Ascending aorta (tissue), 2 donors: ENCODE measurements at regions of chr1 and their contacts with region 1.

Region 1: DNA sequence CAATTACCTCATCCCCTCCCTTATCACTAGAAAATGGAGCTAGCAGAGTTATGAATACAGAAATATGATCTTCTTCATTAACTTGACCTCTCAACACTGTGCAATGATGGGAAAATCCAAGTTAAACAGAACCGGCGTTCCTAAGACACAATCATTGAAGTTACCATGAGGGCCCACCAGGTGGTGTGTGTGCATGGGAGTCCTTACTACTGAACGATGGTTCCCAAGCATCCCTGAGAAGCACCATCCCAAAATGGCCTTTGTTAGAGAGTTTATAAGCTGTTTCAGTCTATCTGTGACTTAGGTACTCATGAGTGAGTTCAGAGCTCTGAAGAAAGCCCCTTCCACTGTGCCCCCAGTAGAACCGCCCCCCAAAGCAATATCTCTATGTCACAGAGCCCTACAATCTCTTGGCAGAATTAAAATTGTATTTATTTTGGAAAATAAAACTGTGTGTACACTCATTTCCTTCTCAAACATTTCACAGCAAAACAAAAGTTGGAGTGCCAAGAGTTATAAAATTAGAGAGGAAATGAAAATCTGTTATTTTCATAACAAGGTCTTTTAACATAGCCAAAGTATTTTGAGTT is 56.8 kb downstream of the PLD5 start:
- DNase-seq: peak in 1 of 2 donors; percentile 85
- H3K4me3 ChIP-seq: peak overlapping the region; percentile 11 to 28
- H3K27ac ChIP-seq: peak overlapping the region; percentile 43 to 72
- H3K4me1 ChIP-seq: peaks cover 3 to 5% of the 10 kb centered on the region in 2 donors
- H3K27me3 ChIP-seq: no peaks in the 10 kb centered on the region
- CTCF ChIP-seq: peak; percentile 25 to 77 (median 61)

Region 2: GRCh38 chr1:241235256-241235897 is 1232.3 kb before region 1 on chr1:
- intact Hi-C with region 1: no loop called
- DNase-seq: no peak
- H3K4me3 ChIP-seq: no peak overlapping the region
- H3K27ac ChIP-seq: no peak overlapping the region
- H3K4me1 ChIP-seq: no peaks in the 10 kb centered on the region
- H3K27me3 ChIP-seq: no peaks in the 10 kb centered on the region
- CTCF ChIP-seq: no peak

Region 3: DNA sequence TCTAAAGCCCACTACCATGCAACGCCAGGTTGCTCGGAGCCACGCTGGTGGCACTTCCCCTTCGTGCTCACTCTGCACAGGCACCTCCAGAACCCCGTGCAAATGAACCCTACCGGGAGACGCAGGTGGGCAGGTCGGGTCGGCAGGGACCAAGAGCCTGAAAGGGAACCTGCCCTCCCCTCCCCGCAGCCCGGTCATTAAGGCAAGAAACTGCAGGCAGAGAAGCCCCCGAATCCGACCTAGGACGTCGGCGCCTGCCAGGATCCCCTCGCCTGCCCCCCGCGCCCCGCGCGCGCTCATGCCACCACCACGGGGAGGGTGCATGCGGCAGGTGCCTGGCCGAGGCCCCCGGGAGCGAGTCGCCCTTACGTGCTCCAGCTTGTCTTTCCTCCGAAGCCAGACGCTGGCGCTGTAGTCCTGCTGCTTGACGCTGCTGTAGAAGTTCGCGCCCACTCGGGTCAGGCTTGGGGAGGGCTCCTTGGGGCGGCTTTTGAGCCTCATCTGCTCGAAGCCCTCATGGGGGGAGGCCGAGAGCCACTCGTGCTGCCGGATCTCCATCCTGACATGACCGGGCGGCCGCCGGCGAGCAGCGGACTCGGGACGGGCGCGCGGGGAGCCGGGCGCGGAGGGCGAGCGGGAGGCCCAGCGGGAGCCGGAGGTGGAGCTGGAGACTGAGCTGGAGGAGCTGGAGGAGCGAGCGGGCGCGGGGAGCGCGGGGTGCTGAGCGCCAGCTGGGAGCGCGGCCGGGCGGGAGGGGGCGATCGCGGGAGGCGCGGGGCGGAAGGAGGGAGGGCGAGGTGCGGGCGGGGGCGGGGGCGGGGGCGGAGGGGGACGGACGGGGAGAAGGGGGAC is 56.3 kb after region 1 on chr1:
- intact Hi-C with region 1: loop called (anchors 2 kb)
- DNase-seq: peak in 1 of 2 donors; percentile 76
- H3K4me3 ChIP-seq: peak overlapping the region; percentile 56 to 84
- H3K27ac ChIP-seq: peak overlapping the region; percentile 55 to 62
- H3K4me1 ChIP-seq: peaks cover 0 to 3% of the 10 kb centered on the region in 2 donors
- H3K27me3 ChIP-seq: no peaks in the 10 kb centered on the region
- CTCF ChIP-seq: peak in 1 of 3 experiments; percentile 25

Region 4: DNA sequence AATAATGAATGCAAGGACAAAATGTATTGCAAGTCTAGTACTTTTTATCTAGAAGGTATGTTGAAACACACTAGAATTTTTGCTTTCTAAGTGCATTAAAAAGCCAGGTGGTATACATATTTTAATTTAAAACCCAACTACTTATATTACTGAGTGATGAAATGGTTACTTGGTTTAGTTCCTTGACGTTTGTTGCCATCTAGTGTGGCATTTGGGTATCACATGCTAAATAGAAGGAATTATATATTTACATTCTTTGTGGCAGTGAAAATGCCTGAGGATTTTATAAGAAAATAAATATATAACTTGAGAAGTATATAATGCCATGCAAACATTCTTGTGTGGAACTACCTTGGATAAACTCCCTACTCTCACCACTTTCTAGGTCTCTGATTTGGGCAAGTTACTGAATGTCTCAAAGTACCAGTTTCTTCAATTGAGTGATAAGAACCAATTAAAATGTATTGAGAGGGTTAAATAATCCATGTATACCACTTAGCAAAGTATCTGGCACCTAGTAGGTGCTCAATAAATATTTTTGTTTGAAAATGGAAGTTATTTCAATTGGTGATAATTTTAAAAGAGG is 857.7 kb after region 1 on chr1:
- intact Hi-C with region 1: loop called (anchors 10 kb)
- DNase-seq: no peak
- H3K4me3 ChIP-seq: no peak overlapping the region
- H3K27ac ChIP-seq: no peak overlapping the region
- H3K4me1 ChIP-seq: no peaks in the 10 kb centered on the region
- H3K27me3 ChIP-seq: no peaks in the 10 kb centered on the region
- CTCF ChIP-seq: peak; percentile 56 to 77 (median 69)